Right cardiac atrium (tissue), 5 donors: ENCODE measurements at regions of chr9 and their contacts with region 1.

Region 1: DNA sequence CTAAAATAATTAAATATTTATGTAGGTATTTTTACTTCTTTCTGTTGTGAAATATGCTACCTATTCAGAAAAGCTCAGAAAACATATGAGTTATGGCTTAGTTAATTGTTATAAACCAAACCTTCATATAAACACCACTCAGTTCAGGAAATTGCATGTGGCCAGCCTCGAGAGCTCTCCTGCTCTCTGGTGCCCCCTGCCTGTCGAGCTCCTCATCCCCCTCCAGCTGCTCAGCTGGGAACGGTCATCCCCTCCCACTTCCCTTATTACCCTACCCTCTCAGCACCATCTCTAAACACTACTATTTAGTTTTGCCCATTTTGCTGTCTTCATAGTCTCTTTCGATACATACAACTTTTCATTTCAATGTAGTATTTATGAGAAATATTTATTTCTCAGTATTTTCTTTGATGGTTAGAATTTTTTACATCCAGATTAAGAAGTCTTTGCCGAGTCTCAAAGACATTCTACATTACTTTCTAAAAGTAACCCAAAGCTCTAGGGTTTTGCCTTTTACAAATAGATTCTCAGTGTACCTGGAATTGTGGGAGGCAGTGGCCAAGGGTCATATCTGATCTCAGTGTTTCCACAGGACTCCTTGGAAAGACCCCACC is 51.2 kb upstream of the SEMA4D start:
- DNase-seq: peak; percentile 76 to 91 (median 91)
- ATAC-seq: peak; percentile 89 to 95
- H3K4me3 ChIP-seq: no peak overlapping the region
- H3K27ac ChIP-seq: no peak overlapping the region
- H3K4me1 ChIP-seq: no peaks in the 10 kb centered on the region
- H3K27me3 ChIP-seq: no peaks in the 10 kb centered on the region

Region 2: GRCh38 chr9:89323390-89323789 is 225.7 kb before region 1 on chr9:
- intact Hi-C with region 1: loop called in 3 of 4 experiments (anchors 10 kb)
- DNase-seq: no peak
- ATAC-seq: no peak
- H3K4me3 ChIP-seq: no peak overlapping the region
- H3K27ac ChIP-seq: no peak overlapping the region
- H3K4me1 ChIP-seq: no peaks in the 10 kb centered on the region
- H3K27me3 ChIP-seq: no peaks in the 10 kb centered on the region

Region 3: GRCh38 chr9:89339807-89340206 is 209.3 kb before region 1 on chr9:
- intact Hi-C with region 1: loop called in 1 of 4 experiments (anchors 10 kb)
- DNase-seq: no peak
- ATAC-seq: no peak
- H3K4me3 ChIP-seq: no peak overlapping the region
- H3K27ac ChIP-seq: no peak overlapping the region
- H3K4me1 ChIP-seq: no peaks in the 10 kb centered on the region
- H3K27me3 ChIP-seq: no peaks in the 10 kb centered on the region

Region 4: GRCh38 chr9:89410641-89411350 is 138.3 kb before region 1 on chr9:
- intact Hi-C with region 1: loop called in 1 of 4 experiments (anchors 10 kb)
- DNase-seq: no peak
- ATAC-seq: no peak
- H3K4me3 ChIP-seq: no peak overlapping the region
- H3K27ac ChIP-seq: no peak overlapping the region
- H3K4me1 ChIP-seq: peaks cover 3% of the 10 kb centered on the region
- H3K27me3 ChIP-seq: no peaks in the 10 kb centered on the region